IMR-90 (cell line): ENCODE measurements at regions of chr12 and their contacts with region 1.

Region 1: GRCh38 chr12:62282057-62282774 is 22.0 kb downstream of the USP15 start:
- DNase-seq: no peak
- ATAC-seq: no peak
- H3K4me3 ChIP-seq: no peak overlapping the region
- H3K27ac ChIP-seq: no peak overlapping the region
- H3K4me1 ChIP-seq: no peaks in the 10 kb centered on the region
- H3K27me3 ChIP-seq: no peaks in the 10 kb centered on the region
- CTCF ChIP-seq: no peak
- POLR2A ChIP-seq: no peak
- RAD21 ChIP-seq: no peak

Region 2: DNA sequence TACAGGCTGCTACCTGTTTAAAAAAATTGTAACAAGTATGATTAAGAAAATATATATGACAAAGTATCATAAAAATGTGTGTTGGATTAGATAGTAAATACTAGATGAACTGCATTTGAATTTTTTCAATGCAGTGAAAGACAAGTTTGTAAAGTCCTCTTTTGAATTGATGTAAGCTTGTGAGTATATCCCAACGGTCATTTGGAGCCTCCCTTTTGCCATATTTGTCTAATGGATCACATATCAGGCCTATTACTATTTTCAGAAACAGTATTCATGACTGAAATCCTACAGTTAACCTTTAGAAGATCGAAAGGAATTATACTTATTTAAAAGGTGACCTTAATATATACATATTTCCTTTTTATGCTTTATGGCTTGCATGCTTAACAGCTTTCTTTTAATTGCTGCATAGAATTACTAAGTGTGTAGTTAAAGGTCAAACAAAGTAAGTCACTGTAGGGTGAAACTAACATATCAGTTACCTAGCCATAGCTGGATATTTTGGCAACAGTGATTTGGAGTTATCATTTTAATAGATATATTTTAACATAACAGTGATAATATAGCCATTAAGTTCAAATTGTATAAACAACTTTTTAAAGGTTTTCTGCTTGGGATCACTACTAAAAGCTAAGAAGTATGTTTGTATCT is 31.6 kb after region 1 on chr12:
- CTCF ChIA-PET with region 1: no interaction called
- POLR2A ChIA-PET with region 1: no interaction called
- dilution Hi-C with region 1: no loop called
- in situ Hi-C with region 1: no loop called
- intact Hi-C with region 1: loop called (anchors 5 kb)
- DNase-seq: no peak
- ATAC-seq: no peak
- H3K4me3 ChIP-seq: no peak overlapping the region
- H3K27ac ChIP-seq: no peak overlapping the region
- H3K4me1 ChIP-seq: no peaks in the 10 kb centered on the region
- H3K27me3 ChIP-seq: no peaks in the 10 kb centered on the region
- CTCF ChIP-seq: no peak
- POLR2A ChIP-seq: no peak
- RAD21 ChIP-seq: no peak

Region 3: GRCh38 chr12:62320054-62320453 is 37.8 kb after region 1 on chr12:
- CTCF ChIA-PET with region 1: no interaction called
- POLR2A ChIA-PET with region 1: no interaction called
- dilution Hi-C with region 1: no loop called
- in situ Hi-C with region 1: no loop called
- intact Hi-C with region 1: loop called (anchors 5 kb)
- DNase-seq: no peak
- ATAC-seq: no peak
- H3K4me3 ChIP-seq: no peak overlapping the region
- H3K27ac ChIP-seq: no peak overlapping the region
- H3K4me1 ChIP-seq: no peaks in the 10 kb centered on the region
- H3K27me3 ChIP-seq: no peaks in the 10 kb centered on the region
- CTCF ChIP-seq: no peak
- POLR2A ChIP-seq: no peak
- RAD21 ChIP-seq: no peak